AG04450 (cell line): ENCODE measurements at regions of chr4 and their contacts with region 1.

Region 1: GRCh38 chr4:158172261-158173258 is at the start of gene GASK1B:
- DNase-seq: peak; percentile 26
- H3K4me3 ChIP-seq: peak within 1 kb of the TSS; percentile 53
- H3K27ac ChIP-seq: no peak within 1 kb of the TSS
- H3K27me3 ChIP-seq: no peaks in the 10 kb centered on the region
- CTCF ChIP-seq: peak; percentile 81
- polyA plus RNA-seq, gene GASK1B: 32.9 and 41.7 TPM in 2 replicates

Region 2: DNA sequence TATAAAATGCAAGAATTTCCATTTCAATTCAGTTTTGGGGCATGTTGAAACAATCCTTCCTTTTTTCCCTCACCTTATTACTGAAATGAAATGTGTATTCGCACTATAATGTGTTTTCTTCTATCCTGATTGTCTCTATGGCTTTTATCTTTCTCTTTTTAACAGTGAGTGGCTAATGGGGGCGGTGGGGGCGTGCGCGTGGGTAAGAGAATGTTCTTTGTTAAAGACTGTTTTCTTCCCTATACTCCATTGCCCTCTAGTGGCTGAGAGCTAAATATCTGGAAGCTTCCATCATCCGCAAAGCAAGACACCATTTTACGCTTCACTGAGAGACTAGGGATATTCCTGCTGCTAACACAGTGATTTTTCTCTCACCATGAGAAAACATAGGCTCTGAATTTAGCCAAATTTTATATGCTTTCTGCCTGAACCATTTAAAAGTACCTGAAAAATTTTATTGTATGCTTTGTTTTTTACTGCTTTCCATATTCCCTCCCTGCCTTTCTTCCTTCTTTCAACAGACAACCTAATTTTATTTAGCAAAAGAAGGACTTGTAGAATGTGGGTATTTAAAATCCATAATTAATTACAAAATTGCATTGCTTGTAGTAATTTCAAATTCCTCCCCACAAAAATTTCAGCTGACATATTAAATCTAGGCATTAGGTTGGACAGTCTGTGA is 193.7 kb before region 1 on chr4:
- CTCF ChIA-PET with region 1: interaction called, 16 read pairs
- POLR2A ChIA-PET with region 1: no interaction called
- DNase-seq: peak; percentile 33
- H3K4me3 ChIP-seq: peak overlapping the region; percentile 11; the same call in 1 of the 2 replicates
- H3K27ac ChIP-seq: no peak overlapping the region
- H3K27me3 ChIP-seq: no peaks in the 10 kb centered on the region
- CTCF ChIP-seq: peak; percentile 89

Region 3: GRCh38 chr4:157996061-157997028 is 176.2 kb before region 1 on chr4:
- CTCF ChIA-PET with region 1: interaction called, 38 read pairs
- POLR2A ChIA-PET with region 1: no interaction called
- DNase-seq: no peak
- H3K4me3 ChIP-seq: no peak overlapping the region
- H3K27ac ChIP-seq: no peak overlapping the region
- H3K27me3 ChIP-seq: no peaks in the 10 kb centered on the region
- CTCF ChIP-seq: no peak

Region 4: DNA sequence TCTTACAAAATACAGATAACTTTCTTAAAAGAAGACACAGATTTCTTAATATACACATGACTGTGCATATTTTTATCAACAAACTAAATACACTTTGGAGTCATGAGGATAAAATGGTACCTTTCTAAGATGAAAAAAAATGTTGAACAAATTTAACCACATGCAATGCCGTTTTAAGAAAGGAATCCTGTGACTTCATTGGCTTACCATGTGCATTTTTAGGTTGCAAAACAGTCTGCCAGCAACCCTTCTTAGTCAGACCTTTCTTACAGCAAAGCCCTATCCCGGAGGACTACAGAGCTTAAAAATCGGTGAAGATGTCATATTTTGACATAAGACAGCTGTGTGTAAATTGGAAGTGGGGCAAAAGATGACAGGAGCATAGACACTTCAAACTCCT is 51.4 kb before region 1 on chr4:
- CTCF ChIA-PET with region 1: interaction called, 9 read pairs
- POLR2A ChIA-PET with region 1: interaction called, 10 read pairs
- DNase-seq: peak; percentile 98
- H3K4me3 ChIP-seq: no peak overlapping the region; the same call in 1 of the 2 replicates
- H3K27ac ChIP-seq: peak overlapping the region; percentile 93
- H3K27me3 ChIP-seq: no peaks in the 10 kb centered on the region
- CTCF ChIP-seq: no peak

Region 5: GRCh38 chr4:158193171-158193749 is 20.7 kb after region 1 on chr4:
- CTCF ChIA-PET with region 1: interaction called, 24 read pairs
- POLR2A ChIA-PET with region 1: no interaction called
- DNase-seq: no peak
- H3K4me3 ChIP-seq: no peak overlapping the region
- H3K27ac ChIP-seq: no peak overlapping the region
- H3K27me3 ChIP-seq: peaks cover 2% of the 10 kb centered on the region
- CTCF ChIP-seq: peak; percentile 62